Sigmoid colon (tissue), 7 donors: ENCODE measurements at regions of chr4 and their contacts with region 1.

Region 1: DNA sequence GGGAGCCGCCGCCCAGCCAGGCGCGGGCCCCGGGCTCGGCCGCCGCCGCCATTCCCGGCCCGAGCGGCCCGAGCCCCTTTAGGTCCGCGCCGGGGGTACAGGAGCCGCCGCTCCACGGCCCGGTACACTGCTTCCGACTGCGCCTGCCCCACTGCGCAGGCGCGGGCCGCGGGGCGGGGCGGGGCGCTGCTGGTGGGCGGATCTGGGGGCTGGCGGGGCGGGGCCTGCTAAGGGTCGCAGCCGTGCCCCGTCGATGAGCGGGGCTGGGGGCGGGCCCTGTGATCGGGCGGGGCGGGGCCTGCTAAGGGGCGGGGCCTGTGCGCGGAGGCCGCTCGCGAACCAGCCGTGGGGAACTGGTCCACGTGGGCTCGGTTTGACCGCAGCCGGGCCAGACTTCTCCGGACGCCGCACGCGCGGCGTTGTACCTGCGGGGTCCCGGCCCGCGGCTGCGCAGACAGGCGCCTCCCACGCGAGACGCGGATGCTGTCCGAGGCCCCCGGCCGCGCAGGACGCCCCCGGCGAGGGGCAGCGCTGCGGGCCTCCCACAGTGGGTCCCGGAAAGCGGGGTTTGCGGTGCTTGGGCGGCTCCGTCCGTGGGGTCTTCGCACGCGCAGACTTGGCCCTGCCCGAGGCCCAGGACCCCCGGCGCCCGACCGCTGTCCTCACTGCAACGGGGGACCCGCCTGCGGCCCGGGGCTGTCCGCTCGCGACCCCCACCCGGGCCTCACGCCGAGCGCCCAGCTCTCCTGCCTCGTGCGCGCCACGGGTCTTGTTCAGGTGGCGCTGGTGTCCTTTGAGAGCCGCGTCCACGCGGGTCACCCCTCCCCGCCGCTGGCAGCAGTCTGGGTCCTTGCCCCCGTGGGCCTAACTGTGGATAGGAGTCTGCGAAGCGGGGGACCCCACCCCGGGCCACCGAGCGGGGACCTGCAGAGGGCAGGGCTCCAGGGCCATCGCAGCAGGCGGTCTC is at the start of gene DGKQ:
- DNase-seq: peak; percentile 94
- H3K4me3 ChIP-seq: peak within 1 kb of the TSS; percentile 58 to 87 (median 82)
- H3K27ac ChIP-seq: peak within 1 kb of the TSS; percentile 8 to 57 (median 44)
- H3K4me1 ChIP-seq: peaks cover 0 to 28% (median 25%) of the 10 kb centered on the region in 4 donors
- H3K27me3 ChIP-seq: peaks cover 0 to 4% (median under 1%) of the 10 kb centered on the region in 3 donors
- CTCF ChIP-seq: no peak
- EP300 ChIP-seq: no peak
- POLR2A ChIP-seq: no peak
- total RNA-seq, gene DGKQ: 3.5 to 8.9 (median 5.1) TPM

Region 2: GRCh38 chr4:637536-638280 is 336.0 kb before region 1 on chr4:
- intact Hi-C with region 1: no loop called
- DNase-seq: peak; percentile 46
- H3K4me3 ChIP-seq: no peak overlapping the region
- H3K27ac ChIP-seq: no peak overlapping the region
- H3K4me1 ChIP-seq: no peaks in the 10 kb centered on the region
- H3K27me3 ChIP-seq: peaks cover 0 to 23% (median 0%) of the 10 kb centered on the region in 3 donors
- CTCF ChIP-seq: no peak
- EP300 ChIP-seq: no peak
- POLR2A ChIP-seq: no peak

Region 3: DNA sequence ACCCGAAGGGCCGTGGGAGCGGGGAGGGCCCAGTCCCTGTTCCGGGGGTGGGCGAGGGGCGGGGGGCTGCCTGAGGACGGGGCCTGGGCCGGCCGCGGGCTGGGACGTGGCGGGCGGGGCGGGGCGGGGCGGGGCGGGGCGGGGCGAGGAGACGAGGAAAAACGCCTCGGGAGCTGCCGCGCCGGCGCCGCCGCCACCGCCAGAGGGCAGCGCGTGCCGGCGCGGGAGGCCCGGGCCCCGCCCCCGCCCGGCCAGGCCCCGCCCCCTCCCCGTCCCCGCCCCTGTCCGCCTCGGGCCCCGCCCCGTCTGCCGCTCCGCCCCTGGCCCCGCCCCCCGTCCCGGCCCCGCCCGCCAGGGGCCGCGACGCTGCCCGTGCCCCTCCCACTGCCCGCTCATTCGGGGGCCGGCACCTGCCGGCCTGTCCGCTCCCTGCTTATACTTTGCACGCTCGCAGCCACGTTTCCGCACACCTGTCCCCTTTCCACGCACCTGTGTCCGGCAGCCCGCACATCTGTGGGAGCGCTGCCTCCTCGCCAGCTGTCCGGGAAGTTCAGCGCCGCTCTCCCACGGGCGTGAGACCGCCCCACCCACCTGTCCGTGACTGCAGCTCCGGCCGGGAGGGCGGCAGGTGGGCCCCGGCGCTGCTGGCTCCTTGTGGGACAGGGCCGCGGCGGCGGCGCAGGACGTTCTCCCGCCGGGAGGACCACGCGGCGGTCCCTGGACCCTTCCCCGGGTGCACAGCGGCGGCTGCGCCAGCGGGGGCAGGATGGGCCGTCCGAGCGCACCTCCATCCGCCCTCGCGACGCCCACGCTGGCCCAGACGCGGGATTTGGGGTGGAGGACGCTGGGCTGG is 36.1 kb after region 1 on chr4:
- intact Hi-C with region 1: loop called (anchors 2 kb)
- DNase-seq: peak; percentile 86
- H3K4me3 ChIP-seq: peak overlapping the region; percentile 58 to 74 (median 68)
- H3K27ac ChIP-seq: peak overlapping the region; percentile 69 to 86 (median 72)
- H3K4me1 ChIP-seq: peaks cover 0 to 34% (median 32%) of the 10 kb centered on the region in 4 donors
- H3K27me3 ChIP-seq: peaks cover 8 to 42% (median 32%) of the 10 kb centered on the region in 3 donors
- CTCF ChIP-seq: peak in 1 of 4 experiments; percentile 4
- EP300 ChIP-seq: no peak
- POLR2A ChIP-seq: no peak

Region 4: GRCh38 chr4:1246901-1247802 is 273.4 kb after region 1 on chr4:
- intact Hi-C with region 1: no loop called
- DNase-seq: peak; percentile 66
- H3K4me3 ChIP-seq: peak overlapping the region; percentile 54 to 98 (median 84)
- H3K27ac ChIP-seq: peak overlapping the region; percentile 88 to 99 (median 98)
- H3K4me1 ChIP-seq: peaks cover 0 to 75% (median 73%) of the 10 kb centered on the region in 4 donors
- H3K27me3 ChIP-seq: no peaks in the 10 kb centered on the region
- CTCF ChIP-seq: no peak
- EP300 ChIP-seq: no peak
- POLR2A ChIP-seq: no peak